Naive thymus-derived CD4-positive, alpha-beta T cell (primary cell): ENCODE measurements at regions of chr3 and their contacts with region 1.

Region 1: GRCh38 chr3:183884427-183885296 is at the start of gene PARL:
- DNase-seq: peak; percentile 88 to 99 (median 95)
- ATAC-seq: peak; percentile 100
- H3K4me3 ChIP-seq: peak within 1 kb of the TSS; percentile 85
- H3K4me3 Mint-ChIP-seq: peak within 1 kb of the TSS; percentile 89 to 98 (median 96)
- H3K27ac ChIP-seq: peak within 1 kb of the TSS; percentile 77
- H3K27ac Mint-ChIP-seq: peak within 1 kb of the TSS; percentile 86 to 96 (median 93)
- H3K4me1 ChIP-seq: peaks cover 15% of the 10 kb centered on the region in 2 donors
- H3K4me1 Mint-ChIP-seq: peaks cover 15 to 53% (median 41%) of the 10 kb centered on the region in 7 donors
- H3K27me3 ChIP-seq: no peaks in the 10 kb centered on the region
- H3K27me3 Mint-ChIP-seq: peaks cover 0 to 3% (median 0%) of the 10 kb centered on the region in 5 donors
- total RNA-seq, gene PARL: 41.6 to 50.4 (median 47.1) TPM

Region 2: GRCh38 chr3:182575941-182576340 is 1308.7 kb before region 1 on chr3:
- CTCF ChIA-PET with region 1: no interaction called
- POLR2A ChIA-PET with region 1: no interaction called
- intact Hi-C with region 1: no loop called
- DNase-seq: no peak
- ATAC-seq: no peak
- H3K4me3 ChIP-seq: no peak overlapping the region
- H3K4me3 Mint-ChIP-seq: no peak overlapping the region
- H3K27ac ChIP-seq: no peak overlapping the region
- H3K27ac Mint-ChIP-seq: no peak overlapping the region
- H3K4me1 ChIP-seq: no peaks in the 10 kb centered on the region
- H3K4me1 Mint-ChIP-seq: no peaks in the 10 kb centered on the region
- H3K27me3 ChIP-seq: no peaks in the 10 kb centered on the region
- H3K27me3 Mint-ChIP-seq: peaks cover 0 to 5% (median 0%) of the 10 kb centered on the region in 5 donors

Region 3: GRCh38 chr3:182909318-182910040 is 975.2 kb before region 1 on chr3:
- CTCF ChIA-PET with region 1: no interaction called
- POLR2A ChIA-PET with region 1: no interaction called
- intact Hi-C with region 1: no loop called
- DNase-seq: peak in 1 of 9 donors; percentile 16
- ATAC-seq: peak; percentile 46
- H3K4me3 ChIP-seq: no peak overlapping the region
- H3K4me3 Mint-ChIP-seq: no peak overlapping the region
- H3K27ac ChIP-seq: peak overlapping the region; percentile 16
- H3K27ac Mint-ChIP-seq: peak overlapping the region in 8 of 9 donors; percentile 20 to 88 (median 72)
- H3K4me1 ChIP-seq: peaks cover 15 to 17% of the 10 kb centered on the region in 2 donors
- H3K4me1 Mint-ChIP-seq: peaks cover 22 to 50% (median 42%) of the 10 kb centered on the region in 7 donors
- H3K27me3 ChIP-seq: no peaks in the 10 kb centered on the region
- H3K27me3 Mint-ChIP-seq: no peaks in the 10 kb centered on the region

Region 4: GRCh38 chr3:183468424-183468823 is 416.2 kb before region 1 on chr3:
- CTCF ChIA-PET with region 1: no interaction called
- POLR2A ChIA-PET with region 1: no interaction called
- intact Hi-C with region 1: loop called (anchors 1 kb)
- DNase-seq: no peak
- ATAC-seq: no peak
- H3K4me3 ChIP-seq: no peak overlapping the region
- H3K4me3 Mint-ChIP-seq: no peak overlapping the region
- H3K27ac ChIP-seq: no peak overlapping the region
- H3K27ac Mint-ChIP-seq: peak overlapping the region in 1 of 9 donors; percentile 27
- H3K4me1 ChIP-seq: peaks cover 0 to 5% of the 10 kb centered on the region in 2 donors
- H3K4me1 Mint-ChIP-seq: peaks cover 2 to 18% (median 5%) of the 10 kb centered on the region in 7 donors
- H3K27me3 ChIP-seq: no peaks in the 10 kb centered on the region
- H3K27me3 Mint-ChIP-seq: peaks cover 0 to 4% (median 0%) of the 10 kb centered on the region in 5 donors

Region 5: DNA sequence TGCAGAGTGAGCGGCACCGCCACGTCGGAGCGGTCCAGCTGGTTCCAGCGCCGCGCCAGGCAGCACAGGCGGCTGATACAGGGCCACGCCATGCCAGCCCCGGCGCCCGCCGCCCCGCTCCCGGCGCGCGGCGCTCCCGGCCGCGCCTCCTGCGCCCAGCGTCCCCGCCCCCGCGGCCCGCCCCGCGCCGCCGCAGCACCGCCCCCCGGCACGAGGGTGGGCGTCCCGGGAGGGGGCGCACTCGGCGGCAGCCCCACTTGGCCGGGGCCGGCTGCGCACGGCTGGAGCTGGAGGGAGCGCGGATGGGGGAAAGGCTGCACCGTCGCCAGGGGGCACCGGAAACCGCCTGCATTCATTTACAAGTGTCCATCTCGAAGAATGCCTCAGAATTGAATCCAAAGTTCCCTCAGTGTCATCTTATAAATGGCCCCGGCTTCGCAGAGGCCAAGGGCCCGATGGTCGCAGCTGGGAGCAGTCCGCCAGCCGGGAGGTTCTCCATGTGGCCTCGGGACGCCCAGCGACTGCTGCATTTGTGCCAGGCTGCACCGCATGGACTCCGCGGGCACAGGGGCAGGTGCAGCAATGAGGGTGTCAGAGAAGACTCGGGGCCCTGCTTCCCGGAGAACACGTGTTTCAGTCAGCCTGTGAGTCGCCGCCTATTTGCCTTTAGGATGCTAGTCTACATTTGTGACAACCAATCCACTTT is 59.1 kb before region 1 on chr3 and contains the start of gene MAP6D1:
- CTCF ChIA-PET with region 1: interaction called, 4 read pairs
- POLR2A ChIA-PET with region 1: no interaction called
- intact Hi-C with region 1: loop called (anchors 1 kb)
- DNase-seq: peak; percentile 16 to 56 (median 32)
- ATAC-seq: peak; percentile 79
- H3K4me3 ChIP-seq: peak within 1 kb of the TSS; percentile 56
- H3K4me3 Mint-ChIP-seq: peak within 1 kb of the TSS; percentile 77 to 90 (median 82)
- H3K27ac ChIP-seq: peak within 1 kb of the TSS; percentile 55
- H3K27ac Mint-ChIP-seq: peak within 1 kb of the TSS in 8 of 9 donors; percentile 36 to 77 (median 70)
- H3K4me1 ChIP-seq: peaks cover 7 to 11% of the 10 kb centered on the region in 2 donors
- H3K4me1 Mint-ChIP-seq: peaks cover 5 to 15% (median 14%) of the 10 kb centered on the region in 7 donors
- H3K27me3 ChIP-seq: no peaks in the 10 kb centered on the region
- H3K27me3 Mint-ChIP-seq: peaks cover 0 to 22% (median 0%) of the 10 kb centered on the region in 5 donors
- total RNA-seq, gene MAP6D1: 0.81 to 2.9 (median 1.2) TPM

Region 6: DNA sequence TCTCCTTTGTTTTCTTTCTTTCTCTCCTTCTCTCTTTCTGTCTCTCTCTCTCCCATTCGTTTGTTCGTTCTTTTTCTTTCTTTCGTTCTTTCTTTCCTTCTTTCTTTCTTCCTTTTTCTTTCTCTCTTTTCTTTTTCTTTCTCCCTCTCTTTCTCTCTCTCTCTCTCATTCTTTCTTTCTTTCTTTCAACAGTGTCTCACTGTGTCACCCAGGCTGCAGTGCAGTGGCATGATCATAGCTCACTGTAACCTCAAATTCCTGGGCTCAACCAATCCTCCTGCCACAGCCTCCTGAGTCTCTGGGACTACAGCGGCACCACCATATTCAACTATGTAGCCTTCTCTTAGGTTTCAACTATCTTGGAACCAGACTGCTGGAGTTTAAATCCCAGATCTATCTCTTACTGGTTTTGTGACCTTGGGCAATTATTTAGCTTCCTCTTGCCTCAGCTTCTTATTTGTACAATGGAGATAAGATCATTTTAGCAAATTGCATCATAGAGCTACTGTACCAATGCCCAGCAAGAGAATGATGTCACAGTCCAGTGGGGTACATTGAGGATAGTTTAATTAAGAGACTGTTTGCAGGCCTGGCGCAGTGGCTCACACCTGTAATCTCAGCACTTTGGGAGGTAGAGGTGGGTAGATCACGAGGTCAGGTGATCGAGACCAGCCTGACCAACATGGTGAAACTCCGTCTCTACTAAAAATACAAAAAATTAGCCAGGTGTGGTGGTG is 27.3 kb after region 1 on chr3:
- CTCF ChIA-PET with region 1: no interaction called
- POLR2A ChIA-PET with region 1: no interaction called
- intact Hi-C with region 1: no loop called
- DNase-seq: no peak
- ATAC-seq: no peak
- H3K4me3 ChIP-seq: no peak overlapping the region
- H3K4me3 Mint-ChIP-seq: no peak overlapping the region
- H3K27ac ChIP-seq: no peak overlapping the region
- H3K27ac Mint-ChIP-seq: no peak overlapping the region
- H3K4me1 ChIP-seq: no peaks in the 10 kb centered on the region
- H3K4me1 Mint-ChIP-seq: no peaks in the 10 kb centered on the region
- H3K27me3 ChIP-seq: no peaks in the 10 kb centered on the region
- H3K27me3 Mint-ChIP-seq: peaks cover 0 to 6% (median 0%) of the 10 kb centered on the region in 5 donors

Region 7: DNA sequence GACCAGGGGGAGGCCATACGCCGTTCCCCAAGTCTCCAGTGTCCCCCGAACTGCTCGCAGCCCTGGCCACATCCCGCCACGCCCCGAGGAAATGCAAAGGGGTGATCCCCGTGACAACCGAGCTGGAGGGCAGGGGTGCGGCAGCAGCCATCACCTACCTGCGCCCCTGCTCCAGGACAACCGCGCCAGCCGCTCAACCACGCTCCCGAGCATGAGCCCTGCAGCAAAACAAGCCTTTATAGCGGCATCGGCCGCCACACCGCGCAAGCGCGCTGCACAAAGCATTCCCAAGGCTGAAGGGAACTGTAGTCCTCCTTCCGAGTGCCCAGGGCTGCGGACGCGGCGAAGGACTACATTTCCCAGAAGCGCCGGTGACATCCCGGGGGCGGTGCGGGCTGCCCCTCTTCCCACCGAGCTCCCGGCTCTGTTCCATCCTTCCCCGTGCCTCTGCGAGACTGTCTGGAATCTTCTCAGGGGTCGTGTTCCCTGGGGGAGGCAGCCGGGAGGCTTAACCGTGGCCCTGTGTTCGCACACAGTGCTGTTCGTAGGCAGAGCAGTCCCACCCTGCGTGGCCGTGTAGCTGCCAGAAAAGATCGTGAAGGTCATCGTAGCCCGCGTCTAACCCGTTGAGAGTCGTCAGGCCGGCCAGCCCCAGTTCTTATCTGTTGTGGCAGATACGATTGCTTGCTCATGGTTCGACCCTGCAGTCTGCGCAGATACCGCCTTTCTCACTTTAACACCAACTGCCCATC is 133.2 kb after region 1 on chr3 and contains the start of gene ABCC5:
- CTCF ChIA-PET with region 1: interaction called, 4 read pairs
- POLR2A ChIA-PET with region 1: no interaction called
- intact Hi-C with region 1: loop called in 1 of 2 experiments (anchors 1 kb)
- DNase-seq: peak; percentile 62 to 84 (median 79)
- ATAC-seq: peak; percentile 96
- H3K4me3 ChIP-seq: peak within 1 kb of the TSS; percentile 100
- H3K4me3 Mint-ChIP-seq: peak within 1 kb of the TSS; percentile 96 to 100 (median 99)
- H3K27ac ChIP-seq: peak within 1 kb of the TSS; percentile 72
- H3K27ac Mint-ChIP-seq: peak within 1 kb of the TSS; percentile 70 to 95 (median 91)
- H3K4me1 ChIP-seq: peaks cover 8 to 14% of the 10 kb centered on the region in 2 donors
- H3K4me1 Mint-ChIP-seq: peaks cover 11 to 33% (median 25%) of the 10 kb centered on the region in 7 donors
- H3K27me3 ChIP-seq: no peaks in the 10 kb centered on the region
- H3K27me3 Mint-ChIP-seq: peaks cover 5 to 15% (median 9%) of the 10 kb centered on the region in 5 donors
- total RNA-seq, gene ABCC5: 15.6 to 50.4 (median 25.5) TPM

Region 8: DNA sequence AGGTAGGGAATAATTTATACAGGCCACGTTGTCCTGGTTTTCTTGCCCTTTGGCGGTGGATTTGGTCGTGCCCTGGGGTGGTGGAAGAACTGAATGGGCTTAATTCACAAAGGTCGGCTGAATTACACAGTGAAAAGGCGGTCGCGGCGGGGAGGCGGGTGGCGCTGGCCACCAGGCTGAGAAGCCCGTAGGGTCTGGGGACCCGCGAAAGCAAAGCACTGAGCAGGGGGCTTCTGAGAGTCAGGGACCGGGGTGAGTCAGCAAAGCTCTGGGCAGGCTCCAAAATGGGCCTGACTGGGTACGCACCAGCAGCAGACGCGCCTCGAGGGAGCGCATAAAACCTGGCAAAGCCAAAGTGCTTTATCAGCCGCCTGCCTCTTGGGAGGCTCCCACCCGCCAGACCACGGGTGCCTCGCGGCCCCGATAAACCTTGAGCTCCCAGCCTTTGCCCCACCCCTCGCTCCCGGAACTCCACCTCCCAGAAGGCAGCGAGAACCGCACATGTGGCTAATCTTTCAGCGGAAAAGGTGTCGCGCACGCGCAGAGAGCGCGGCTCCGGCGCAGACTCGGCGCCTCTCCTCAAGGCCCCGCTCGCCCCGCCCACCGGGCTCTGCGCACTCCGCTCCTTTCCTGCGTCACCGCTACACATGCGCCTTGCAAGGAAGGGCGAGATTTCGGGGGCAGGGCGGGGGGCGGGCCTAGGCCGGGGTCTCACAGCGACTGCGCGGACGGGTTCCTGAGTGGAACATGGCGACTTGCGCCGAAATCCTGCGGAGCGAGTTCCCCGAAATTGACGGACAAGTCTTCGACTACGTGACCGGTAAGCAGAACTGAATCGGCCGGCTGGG is 301.0 kb after region 1 on chr3 and contains the start of gene ABCF3:
- CTCF ChIA-PET with region 1: no interaction called
- POLR2A ChIA-PET with region 1: no interaction called
- intact Hi-C with region 1: loop called (anchors 1 kb)
- DNase-seq: peak; percentile 98 to 100 (median 99)
- ATAC-seq: peak; percentile 96
- H3K4me3 ChIP-seq: peak within 1 kb of the TSS; percentile 81
- H3K4me3 Mint-ChIP-seq: peak within 1 kb of the TSS; percentile 91 to 100 (median 98)
- H3K27ac ChIP-seq: peak within 1 kb of the TSS; percentile 89
- H3K27ac Mint-ChIP-seq: peak within 1 kb of the TSS; percentile 89 to 98 (median 97)
- H3K4me1 ChIP-seq: peaks cover 18 to 24% of the 10 kb centered on the region in 2 donors
- H3K4me1 Mint-ChIP-seq: peaks cover 31 to 52% (median 43%) of the 10 kb centered on the region in 7 donors
- H3K27me3 ChIP-seq: no peaks in the 10 kb centered on the region
- H3K27me3 Mint-ChIP-seq: no peaks in the 10 kb centered on the region
- total RNA-seq, gene ABCF3: 79.3 to 153 (median 117) TPM